ENCODE measurements at regions of chr1 and their contacts with region 1.

Region 1: GRCh38 chr1:22976461-22977243 is 4.0 kb upstream of the LACTBL1 start:
- DNase-seq: peak; percentile 78
- H3K4me3 ChIP-seq: no peak overlapping the region
- H3K27ac ChIP-seq: no peak overlapping the region
- H3K4me1 ChIP-seq: no peaks in the 10 kb centered on the region
- CTCF ChIP-seq: peak; percentile 95

Region 2: GRCh38 chr1:23098463-23099170 is 122.0 kb after region 1 on chr1:
- CTCF ChIA-PET with region 1: no interaction called
- POLR2A ChIA-PET with region 1: interaction called, 3 read pairs
- intact Hi-C with region 1: loop called (anchors 1 kb)
- DNase-seq: peak; percentile 80
- H3K4me3 ChIP-seq: no peak overlapping the region
- H3K27ac ChIP-seq: no peak overlapping the region
- H3K4me1 ChIP-seq: peaks cover 27% of the 10 kb centered on the region
- CTCF ChIP-seq: peak; percentile 91

Region 3: DNA sequence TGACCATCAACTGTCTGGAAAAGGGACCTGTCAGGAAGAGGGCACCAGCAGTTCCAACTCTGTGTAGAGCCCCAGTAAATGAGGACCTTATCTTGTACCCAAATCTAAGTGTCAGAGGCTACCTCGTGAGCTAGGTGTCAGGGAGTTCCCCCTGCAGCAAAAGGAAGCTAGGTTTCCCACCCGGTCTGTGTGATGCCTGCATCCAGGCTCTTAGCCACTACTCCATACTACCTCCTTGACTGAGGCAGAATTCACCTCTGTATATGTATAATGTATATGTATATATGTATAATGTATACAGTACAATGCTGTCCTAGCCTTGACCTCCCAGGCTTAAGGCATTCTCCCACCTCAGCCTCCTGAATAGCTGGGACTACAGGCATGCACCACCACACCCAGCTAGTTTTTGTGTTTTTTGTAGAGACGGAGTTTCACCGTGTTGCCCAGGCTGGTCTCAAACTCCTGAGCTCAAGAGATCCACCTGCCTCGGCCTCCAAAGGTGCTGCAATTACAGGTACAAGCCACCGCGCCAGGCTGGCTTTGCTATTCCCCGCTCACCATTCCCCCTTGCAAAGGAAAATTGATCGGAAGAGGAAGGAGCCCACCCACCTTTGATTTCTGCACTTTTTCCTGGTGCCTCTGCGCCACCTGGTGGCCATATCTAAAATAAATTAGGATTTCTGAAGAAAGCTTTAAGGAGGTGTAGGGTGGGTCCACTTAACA is 207.7 kb after region 1 on chr1:
- CTCF ChIA-PET with region 1: no interaction called
- POLR2A ChIA-PET with region 1: no interaction called
- intact Hi-C with region 1: loop called (anchors 1 kb)
- DNase-seq: peak; percentile 69
- H3K4me3 ChIP-seq: no peak overlapping the region
- H3K27ac ChIP-seq: no peak overlapping the region
- H3K4me1 ChIP-seq: peaks cover 12% of the 10 kb centered on the region
- CTCF ChIP-seq: peak; percentile 89

Region 4: DNA sequence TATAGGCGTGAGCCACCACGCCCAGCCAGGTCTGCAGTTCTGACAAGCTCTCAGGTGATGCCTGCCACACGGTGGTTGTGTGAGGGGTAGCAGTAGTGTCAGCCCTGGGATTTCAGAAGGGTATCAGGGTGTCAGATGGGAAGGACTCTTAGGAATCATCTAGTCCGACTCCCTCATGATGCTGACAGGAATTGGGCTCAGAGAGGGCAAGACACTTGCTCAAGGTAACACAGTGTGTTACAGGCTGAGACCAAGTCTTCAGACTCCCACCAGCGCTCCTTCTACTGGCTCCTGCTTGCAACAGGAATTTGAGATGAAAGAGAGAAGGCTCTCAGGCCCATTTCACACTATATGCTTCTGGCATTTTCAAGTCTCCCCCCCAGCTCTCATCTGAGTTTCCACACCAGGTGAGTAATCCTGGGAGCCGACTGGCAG is 233.7 kb after region 1 on chr1:
- CTCF ChIA-PET with region 1: no interaction called
- POLR2A ChIA-PET with region 1: no interaction called
- intact Hi-C with region 1: loop called (anchors 1 kb)
- DNase-seq: peak; percentile 52
- H3K4me3 ChIP-seq: no peak overlapping the region
- H3K27ac ChIP-seq: no peak overlapping the region
- H3K4me1 ChIP-seq: no peaks in the 10 kb centered on the region
- CTCF ChIP-seq: peak; percentile 75

Region 5: GRCh38 chr1:23273450-23274133 is 296.9 kb after region 1 on chr1:
- CTCF ChIA-PET with region 1: no interaction called
- POLR2A ChIA-PET with region 1: no interaction called
- intact Hi-C with region 1: loop called (anchors 5 kb)
- DNase-seq: no peak
- H3K4me3 ChIP-seq: no peak overlapping the region
- H3K27ac ChIP-seq: no peak overlapping the region
- H3K4me1 ChIP-seq: no peaks in the 10 kb centered on the region
- CTCF ChIP-seq: no peak